Sigmoid colon (tissue), 7 donors: ENCODE measurements at regions of chr20 and their contacts with region 1.

Region 1: GRCh38 chr20:32357869-32358631 is at the start of gene ASXL1:
- DNase-seq: peak; percentile 98
- H3K4me3 ChIP-seq: peak within 1 kb of the TSS; percentile 94 to 98 (median 97)
- H3K27ac ChIP-seq: peak within 1 kb of the TSS; percentile 96 to 99 (median 96)
- H3K4me1 ChIP-seq: peaks cover 0 to 73% (median 59%) of the 10 kb centered on the region in 4 donors
- H3K27me3 ChIP-seq: no peaks in the 10 kb centered on the region
- CTCF ChIP-seq: no peak
- EP300 ChIP-seq: no peak
- POLR2A ChIP-seq: peak in 1 of 2 donors; percentile 33
- total RNA-seq, gene ASXL1: 46.7 to 102 (median 77.6) TPM

Region 2: GRCh38 chr20:32207626-32208498 is 150.2 kb before region 1 on chr20 and contains the starts of genes PLAGL2 and POFUT1:
- intact Hi-C with region 1: loop called (anchors 10 kb)
- DNase-seq: peak; percentile 91
- H3K4me3 ChIP-seq: peak within 1 kb of the TSS; percentile 70 to 100 (median 91)
- H3K27ac ChIP-seq: peak within 1 kb of the TSS; percentile 75 to 93 (median 85)
- H3K4me1 ChIP-seq: peaks cover 0 to 58% (median 54%) of the 10 kb centered on the region in 4 donors
- H3K27me3 ChIP-seq: no peaks in the 10 kb centered on the region
- CTCF ChIP-seq: no peak
- EP300 ChIP-seq: no peak
- POLR2A ChIP-seq: peak in 1 of 2 donors; percentile 46
- total RNA-seq, gene PLAGL2: 3.3 to 5.6 (median 4.6) TPM
- total RNA-seq, gene POFUT1: 23.5 to 31.6 (median 27.8) TPM

Region 3: DNA sequence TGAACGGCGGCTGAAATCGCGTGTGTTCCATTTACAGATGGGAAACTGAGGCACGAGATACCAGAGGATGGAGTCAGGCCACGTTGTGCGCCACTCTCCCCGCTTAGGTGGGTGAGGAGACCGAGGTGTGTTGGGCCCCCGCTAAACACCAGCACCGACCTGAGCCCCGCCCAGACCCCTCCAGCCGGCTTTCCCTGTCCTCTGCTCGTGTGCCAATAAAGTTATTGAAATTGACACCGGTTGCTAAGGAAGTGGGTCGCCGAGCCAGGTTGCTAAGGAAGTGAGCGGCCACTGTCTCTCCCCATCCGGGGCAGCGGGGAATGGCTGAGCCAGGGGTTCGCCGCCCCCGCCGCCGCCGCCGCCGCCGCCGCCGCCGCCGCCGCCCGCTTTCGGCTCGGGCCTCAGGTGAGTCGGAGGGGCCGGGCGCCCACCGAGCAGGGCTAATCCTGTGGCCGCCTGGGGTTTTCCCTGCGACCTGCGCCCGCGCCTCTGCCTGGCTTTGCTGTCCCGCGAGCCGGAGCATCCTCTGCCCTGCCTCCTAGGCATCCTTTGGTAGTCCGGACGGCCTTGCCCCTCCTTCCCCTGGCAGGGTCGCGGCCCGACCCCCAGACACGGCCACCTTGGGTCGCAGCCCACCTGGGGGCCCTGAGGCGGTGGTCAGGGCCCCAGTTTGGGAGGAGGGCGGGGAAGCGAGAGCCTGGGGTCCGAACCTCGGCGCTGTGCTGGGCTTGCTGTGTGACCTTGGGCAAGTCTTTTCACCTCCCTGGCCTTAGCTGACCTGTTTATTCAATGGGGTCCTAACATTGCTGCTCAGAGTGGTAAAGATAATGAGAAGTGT is 80.5 kb before region 1 on chr20 and contains the start of gene KIF3B:
- intact Hi-C with region 1: loop called (anchors 5 kb)
- DNase-seq: peak; percentile 94
- H3K4me3 ChIP-seq: peak within 1 kb of the TSS; percentile 63 to 91 (median 74)
- H3K27ac ChIP-seq: peak within 1 kb of the TSS; percentile 75 to 83 (median 76)
- H3K4me1 ChIP-seq: peaks cover 0 to 16% (median 16%) of the 10 kb centered on the region in 4 donors
- H3K27me3 ChIP-seq: no peaks in the 10 kb centered on the region
- CTCF ChIP-seq: no peak
- EP300 ChIP-seq: peak in 1 of 4 donors; percentile 17
- POLR2A ChIP-seq: no peak
- total RNA-seq, gene KIF3B: 16.1 to 25.8 (median 18.6) TPM

Region 4: GRCh38 chr20:32465092-32465900 is 107.2 kb after region 1 on chr20:
- intact Hi-C with region 1: loop called (anchors 5 kb)
- DNase-seq: peak; percentile 92
- H3K4me3 ChIP-seq: no peak overlapping the region
- H3K27ac ChIP-seq: peak overlapping the region; percentile 81 to 97 (median 92)
- H3K4me1 ChIP-seq: peaks cover 0 to 89% (median 86%) of the 10 kb centered on the region in 4 donors
- H3K27me3 ChIP-seq: no peaks in the 10 kb centered on the region
- CTCF ChIP-seq: no peak
- EP300 ChIP-seq: peak in 1 of 4 donors; percentile 37
- POLR2A ChIP-seq: no peak

Region 5: GRCh38 chr20:32474967-32475811 is 117.1 kb after region 1 on chr20:
- intact Hi-C with region 1: loop called (anchors 2 kb)
- DNase-seq: peak; percentile 96
- H3K4me3 ChIP-seq: peak overlapping the region; percentile 12 to 44 (median 42)
- H3K27ac ChIP-seq: peak overlapping the region; percentile 89 to 97 (median 94)
- H3K4me1 ChIP-seq: peaks cover 0 to 100% (median 96%) of the 10 kb centered on the region in 4 donors
- H3K27me3 ChIP-seq: no peaks in the 10 kb centered on the region
- CTCF ChIP-seq: peak in 1 of 4 experiments; percentile 26
- EP300 ChIP-seq: no peak
- POLR2A ChIP-seq: peak in 1 of 2 donors; percentile 44

Region 6: GRCh38 chr20:32484958-32485769 is 127.1 kb after region 1 on chr20:
- intact Hi-C with region 1: loop called (anchors 1 kb)
- DNase-seq: peak; percentile 86
- H3K4me3 ChIP-seq: peak overlapping the region; percentile 74 to 97 (median 96)
- H3K27ac ChIP-seq: peak overlapping the region; percentile 85 to 97 (median 94)
- H3K4me1 ChIP-seq: peaks cover 0 to 40% (median 31%) of the 10 kb centered on the region in 4 donors
- H3K27me3 ChIP-seq: no peaks in the 10 kb centered on the region
- CTCF ChIP-seq: peak; percentile 70 to 90 (median 84)
- EP300 ChIP-seq: no peak
- POLR2A ChIP-seq: no peak